ENCODE measurements at regions of chr6 and their contacts with region 1.

Region 1: GRCh38 chr6:125956506-125957390 is at the start of gene HINT3:
- DNase-seq: peak; percentile 97
- ATAC-seq: peak; percentile 76
- H3K4me3 ChIP-seq: peak within 1 kb of the TSS; percentile 98
- H3K27ac ChIP-seq: peak within 1 kb of the TSS; percentile 43
- H3K4me1 ChIP-seq: peaks cover 10% of the 10 kb centered on the region; the same call in 1 of the 2 replicates
- H3K27me3 ChIP-seq: no peaks in the 10 kb centered on the region
- CTCF ChIP-seq: peak; percentile 87
- total RNA-seq, gene HINT3: 7.8 and 8.0 TPM in 2 replicates

Region 2: DNA sequence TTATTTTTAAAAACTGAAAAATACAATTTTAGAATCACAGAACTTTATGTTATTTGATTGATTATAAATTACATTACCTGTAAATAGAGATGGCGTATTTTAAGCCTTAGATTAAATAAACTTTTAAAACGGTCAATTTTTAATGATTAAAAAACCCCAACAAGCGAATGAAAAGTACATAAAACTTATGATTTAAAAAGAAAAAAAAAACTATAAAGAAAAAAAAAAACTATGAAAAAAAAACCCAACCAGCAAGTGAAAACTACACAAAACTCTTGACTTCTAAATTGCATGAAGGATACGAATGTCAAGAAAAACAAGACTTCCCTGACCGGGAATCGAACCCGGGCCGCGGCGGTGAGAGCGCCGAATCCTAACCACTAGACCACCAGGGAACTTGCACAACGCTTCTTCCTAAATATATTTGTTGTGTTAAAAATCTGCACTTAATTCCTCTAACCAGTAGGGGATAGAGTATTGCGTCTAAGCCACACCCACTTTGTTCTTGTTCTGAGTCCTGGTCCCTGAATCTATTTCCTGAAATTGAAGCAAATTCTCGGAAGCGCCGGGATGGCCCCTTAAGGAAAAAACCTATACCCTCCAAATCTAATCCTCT is 176.7 kb before region 1 on chr6:
- CTCF ChIA-PET with region 1: no interaction called
- POLR2A ChIA-PET with region 1: no interaction called
- intact Hi-C with region 1: loop called (anchors 1 kb)
- DNase-seq: peak; percentile 94
- ATAC-seq: peak; percentile 68
- H3K4me3 ChIP-seq: peak overlapping the region; percentile 94
- H3K27ac ChIP-seq: peak overlapping the region; percentile 54
- H3K4me1 ChIP-seq: peaks cover 15% of the 10 kb centered on the region
- H3K27me3 ChIP-seq: peaks cover 4% of the 10 kb centered on the region; the same call in 1 of the 2 replicates
- CTCF ChIP-seq: no peak

Region 3: GRCh38 chr6:125858427-125859320 is 98.1 kb before region 1 on chr6:
- CTCF ChIA-PET with region 1: interaction called, 3 read pairs
- POLR2A ChIA-PET with region 1: no interaction called
- intact Hi-C with region 1: loop called (anchors 1 kb)
- DNase-seq: peak; percentile 85
- ATAC-seq: peak; percentile 99
- H3K4me3 ChIP-seq: no peak overlapping the region
- H3K27ac ChIP-seq: no peak overlapping the region
- H3K4me1 ChIP-seq: no peaks in the 10 kb centered on the region
- H3K27me3 ChIP-seq: no peaks in the 10 kb centered on the region
- CTCF ChIP-seq: peak; percentile 89

Region 4: GRCh38 chr6:125872259-125872921 is 84.4 kb before region 1 on chr6:
- CTCF ChIA-PET with region 1: interaction called, 4 read pairs
- POLR2A ChIA-PET with region 1: no interaction called
- intact Hi-C with region 1: loop called (anchors 5 kb)
- DNase-seq: peak; percentile 78
- ATAC-seq: peak; percentile 68
- H3K4me3 ChIP-seq: peak overlapping the region; percentile 23; the same call in 1 of the 2 replicates
- H3K27ac ChIP-seq: peak overlapping the region; percentile 68
- H3K4me1 ChIP-seq: peaks cover 40% of the 10 kb centered on the region
- H3K27me3 ChIP-seq: no peaks in the 10 kb centered on the region
- CTCF ChIP-seq: no peak

Region 5: DNA sequence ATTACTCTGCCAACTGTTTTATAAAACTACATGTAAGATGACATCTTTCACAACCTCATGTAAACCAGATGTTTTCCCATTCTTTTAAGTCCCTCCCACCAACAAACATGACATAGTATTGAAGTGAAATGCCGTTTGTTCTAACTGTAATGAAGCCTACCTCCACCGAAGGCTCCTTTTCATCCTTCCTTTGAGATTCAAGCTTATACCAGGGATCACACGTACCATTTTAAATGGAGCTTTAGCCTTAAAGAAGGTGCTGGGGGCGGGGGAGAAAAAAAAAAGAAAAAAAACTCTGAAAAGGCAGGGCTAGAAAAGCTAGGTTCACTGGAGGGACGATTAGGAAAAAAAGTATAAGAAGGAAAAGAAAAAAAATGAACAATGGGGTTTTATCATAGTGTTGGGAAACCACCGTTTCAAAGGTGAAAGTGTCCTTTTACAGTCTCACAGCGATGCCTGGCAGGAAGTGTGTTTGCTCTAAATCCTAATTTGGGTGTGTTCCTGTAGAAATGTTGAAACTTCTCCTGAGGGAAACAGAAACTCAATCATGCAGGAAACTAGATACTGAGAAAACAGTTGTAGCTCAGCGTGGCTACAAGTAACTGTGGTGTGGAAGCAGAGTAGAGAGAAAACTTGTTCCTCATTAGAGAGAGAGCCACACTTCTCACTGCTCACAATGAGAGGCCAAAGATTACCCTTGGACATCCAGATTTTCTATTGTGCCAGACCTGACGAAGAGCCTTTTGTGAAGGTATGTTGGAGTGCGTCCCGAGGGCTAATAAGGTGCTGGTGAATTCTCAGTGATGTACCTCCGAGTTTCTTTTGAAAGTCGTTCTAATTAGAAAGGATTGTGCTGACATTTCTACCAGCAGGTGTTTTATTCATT is 37.8 kb before region 1 on chr6:
- CTCF ChIA-PET with region 1: interaction called, 7 read pairs
- POLR2A ChIA-PET with region 1: no interaction called
- intact Hi-C with region 1: loop called (anchors 5 kb)
- DNase-seq: peak; percentile 79
- ATAC-seq: peak; percentile 77
- H3K4me3 ChIP-seq: peak overlapping the region; percentile 68
- H3K27ac ChIP-seq: peak overlapping the region; percentile 90
- H3K4me1 ChIP-seq: peaks cover 54% of the 10 kb centered on the region
- H3K27me3 ChIP-seq: no peaks in the 10 kb centered on the region
- CTCF ChIP-seq: no peak

Region 6: DNA sequence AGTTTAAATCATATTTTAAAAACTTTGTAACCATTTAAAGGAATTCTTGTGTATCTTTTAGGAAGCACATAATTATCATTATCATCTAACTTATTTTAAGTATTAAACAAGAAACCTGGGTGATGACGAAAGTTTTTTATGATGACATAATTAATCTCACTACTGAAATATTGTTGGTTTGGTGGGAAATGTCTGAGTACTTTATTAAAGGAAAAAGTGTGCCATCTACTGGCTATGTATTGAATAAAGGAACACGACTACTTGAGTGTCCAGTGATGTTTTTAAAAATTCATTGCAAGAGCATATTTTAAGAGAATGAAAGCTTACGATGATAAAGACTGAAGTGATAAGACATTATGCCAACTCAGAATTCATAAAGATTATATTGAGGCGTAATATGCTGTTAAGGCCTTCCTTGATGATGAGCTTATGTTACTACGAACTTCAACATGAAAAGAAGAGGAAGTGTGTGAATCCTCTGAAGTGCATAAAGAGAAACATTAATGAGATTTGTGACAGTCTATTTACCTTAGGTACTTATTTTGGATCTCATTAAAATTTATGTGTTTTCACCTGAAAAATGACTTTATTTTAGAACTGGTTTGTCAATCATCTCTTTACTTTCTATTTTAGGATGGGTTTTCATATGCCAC is 17.6 kb after region 1 on chr6:
- CTCF ChIA-PET with region 1: interaction called, 6 read pairs
- POLR2A ChIA-PET with region 1: no interaction called
- intact Hi-C with region 1: loop called (anchors 1 kb)
- DNase-seq: peak; percentile 61
- ATAC-seq: no peak; the same call in 1 of the 2 replicates
- H3K4me3 ChIP-seq: no peak overlapping the region
- H3K27ac ChIP-seq: no peak overlapping the region
- H3K4me1 ChIP-seq: peaks cover 12% of the 10 kb centered on the region
- H3K27me3 ChIP-seq: no peaks in the 10 kb centered on the region
- CTCF ChIP-seq: peak; percentile 75

Region 7: GRCh38 chr6:126063512-126064146 is 106.9 kb after region 1 on chr6:
- CTCF ChIA-PET with region 1: no interaction called
- POLR2A ChIA-PET with region 1: no interaction called
- intact Hi-C with region 1: no loop called
- DNase-seq: peak; percentile 18
- ATAC-seq: no peak; the same call in 1 of the 2 replicates
- H3K4me3 ChIP-seq: no peak overlapping the region
- H3K27ac ChIP-seq: no peak overlapping the region
- H3K4me1 ChIP-seq: no peaks in the 10 kb centered on the region
- H3K27me3 ChIP-seq: no peaks in the 10 kb centered on the region
- CTCF ChIP-seq: no peak

Region 8: DNA sequence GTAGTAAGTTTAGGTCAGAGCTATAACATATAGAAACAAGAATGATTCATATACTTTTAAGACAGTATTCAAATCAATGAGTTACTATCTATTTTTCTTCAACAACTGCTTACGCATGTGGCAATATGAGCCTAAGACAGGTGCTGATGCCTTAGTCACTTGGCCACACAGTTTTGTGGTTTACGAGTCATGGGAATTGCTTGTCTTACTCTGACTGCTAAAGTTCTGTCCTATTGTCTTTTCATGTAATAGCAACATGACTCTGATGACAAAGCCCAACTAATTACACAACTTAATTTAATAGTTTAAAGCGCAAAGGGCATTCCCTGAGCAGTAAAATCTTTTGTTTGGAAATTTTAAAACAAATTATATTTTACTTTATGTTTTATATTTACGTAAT is 223.8 kb after region 1 on chr6:
- CTCF ChIA-PET with region 1: no interaction called
- POLR2A ChIA-PET with region 1: no interaction called
- intact Hi-C with region 1: no loop called
- DNase-seq: peak; percentile 91
- ATAC-seq: peak; percentile 95
- H3K4me3 ChIP-seq: no peak overlapping the region
- H3K27ac ChIP-seq: peak overlapping the region; percentile 99
- H3K4me1 ChIP-seq: peaks cover 40% of the 10 kb centered on the region
- H3K27me3 ChIP-seq: no peaks in the 10 kb centered on the region
- CTCF ChIP-seq: no peak